ENCODE measurements at regions of chr7 and their contacts with region 1.

Region 1: GRCh38 chr7:134520130-134520529 is 7.2 kb upstream of the AKR1B10 start:
- DNase-seq: no peak
- H3K4me3 ChIP-seq: no peak overlapping the region
- H3K27ac ChIP-seq: no peak overlapping the region
- H3K4me1 ChIP-seq: no peaks in the 10 kb centered on the region
- H3K27me3 ChIP-seq: no peaks in the 10 kb centered on the region
- CTCF ChIP-seq: peak in 5 of 6 experiments; percentile 21 to 48 (median 35)
- POLR2A ChIP-seq: no peak

Region 2: GRCh38 chr7:134605973-134606923 is 86.1 kb after region 1 on chr7:
- intact Hi-C with region 1: loop called (anchors 2 to 5 kb)
- DNase-seq: peak; percentile 60 to 88 (median 72)
- H3K4me3 ChIP-seq: peak overlapping the region in 1 of 4 donors; percentile 33
- H3K27ac ChIP-seq: peak overlapping the region in 3 of 5 donors; percentile 40 to 59 (median 41)
- H3K4me1 ChIP-seq: peaks cover 0 to 15% of the 10 kb centered on the region in 2 donors
- H3K27me3 ChIP-seq: no peaks in the 10 kb centered on the region
- CTCF ChIP-seq: peak; percentile 86 to 96 (median 92)
- POLR2A ChIP-seq: no peak

Region 3: GRCh38 chr7:135602304-135602703 is 1082.2 kb after region 1 on chr7:
- intact Hi-C with region 1: no loop called
- DNase-seq: peak in 1 of 7 donors; percentile 17
- H3K4me3 ChIP-seq: no peak overlapping the region
- H3K27ac ChIP-seq: no peak overlapping the region
- H3K4me1 ChIP-seq: peaks cover 7 to 11% of the 10 kb centered on the region in 2 donors
- H3K27me3 ChIP-seq: no peaks in the 10 kb centered on the region
- CTCF ChIP-seq: no peak
- POLR2A ChIP-seq: no peak

Measured in adrenal gland (tissue), 19 donors.